A549 (cell line): ENCODE measurements at regions of chr1 and their contacts with region 1.

Region 1: DNA sequence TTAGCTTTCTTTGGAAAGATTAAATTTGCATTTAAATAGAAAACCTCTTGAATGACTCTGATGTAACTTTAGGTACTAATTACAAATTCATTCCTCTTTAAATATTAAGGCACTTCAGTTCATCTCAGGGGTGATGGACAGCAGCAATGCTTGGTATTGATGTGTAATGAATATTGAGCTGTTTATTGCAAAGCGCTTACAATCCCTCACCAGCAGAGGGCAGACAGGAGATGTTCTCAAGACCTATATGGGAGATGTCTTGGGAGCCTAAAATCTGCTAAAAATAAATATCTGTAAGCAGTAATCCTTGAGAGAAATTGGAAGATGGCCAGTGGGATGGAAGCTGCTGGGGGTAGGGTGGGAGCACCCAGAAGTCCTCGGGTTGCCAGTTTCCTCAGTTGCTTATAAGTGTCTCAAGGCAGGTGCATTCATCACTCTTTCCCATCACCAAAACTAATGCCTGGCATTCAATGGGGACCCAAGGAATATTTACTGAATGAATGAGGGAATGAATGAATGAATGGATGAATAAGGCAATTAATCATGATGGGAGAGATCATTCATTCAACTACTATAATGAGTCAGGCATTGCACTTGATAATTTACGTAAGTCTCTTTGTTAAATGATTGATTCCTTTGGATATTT is 2.3 kb downstream of the KLHDC8A start:
- DNase-seq: peak; percentile 35 to 76
- ATAC-seq: peak; percentile 65 to 83; a peak in 4 of 6 replicates
- H3K4me3 ChIP-seq: no peak overlapping the region
- H3K27ac ChIP-seq: no peak overlapping the region; a peak in 1 of 6 replicates
- H3K4me1 ChIP-seq: peaks cover 25% of the 10 kb centered on the region
- CTCF ChIP-seq: peak; percentile 86
- EP300 ChIP-seq: no peak
- POLR2A ChIP-seq: no peak
- RAD21 ChIP-seq: peak; percentile 74 to 79

Region 2: GRCh38 chr1:204940591-204940990 is 413.8 kb before region 1 on chr1:
- CTCF ChIA-PET with region 1: no interaction called
- POLR2A ChIA-PET with region 1: no interaction called
- DNase-seq: no peak
- ATAC-seq: no peak
- H3K4me3 ChIP-seq: no peak overlapping the region
- H3K27ac ChIP-seq: no peak overlapping the region
- H3K4me1 ChIP-seq: no peaks in the 10 kb centered on the region
- CTCF ChIP-seq: no peak
- EP300 ChIP-seq: no peak
- POLR2A ChIP-seq: no peak
- RAD21 ChIP-seq: no peak

Region 3: DNA sequence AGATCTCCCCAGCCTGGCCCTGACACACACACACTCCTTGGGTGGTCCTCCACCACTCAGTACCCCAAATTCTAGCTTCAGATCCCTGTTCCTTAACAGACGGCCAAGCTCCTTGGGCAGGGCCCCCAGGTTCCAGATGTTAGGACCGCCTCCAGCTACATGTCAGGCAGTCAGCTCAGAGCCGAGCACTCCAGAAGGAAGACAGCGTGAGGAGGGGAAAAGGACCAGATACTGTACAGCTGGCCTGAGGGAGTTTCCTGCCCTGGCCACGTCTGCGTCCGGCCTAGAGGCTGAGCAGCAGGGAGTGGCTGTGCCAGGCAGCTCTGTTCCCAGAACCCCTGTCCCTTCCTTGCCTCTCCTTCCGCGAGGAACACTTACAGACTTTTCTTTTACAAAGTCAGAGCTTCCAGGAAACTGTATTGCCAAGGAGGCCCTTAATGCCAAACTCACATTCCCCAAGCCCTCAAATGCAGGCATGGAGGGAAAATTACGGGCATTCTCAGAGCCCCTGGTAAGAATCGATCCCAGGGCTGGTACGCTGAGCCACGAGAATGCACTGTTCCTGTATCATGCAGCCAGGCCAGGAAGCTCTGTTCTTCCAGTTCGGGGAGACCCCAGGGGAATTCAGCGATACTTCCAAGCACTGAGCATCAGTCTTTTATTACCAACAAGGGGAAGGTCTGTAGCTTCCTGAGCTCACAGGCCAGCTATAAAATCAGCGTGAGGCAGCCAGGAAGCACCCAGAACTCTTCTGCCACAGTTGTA is 356.6 kb before region 1 on chr1:
- CTCF ChIA-PET with region 1: no interaction called
- POLR2A ChIA-PET with region 1: no interaction called
- DNase-seq: no peak
- ATAC-seq: no peak
- H3K4me3 ChIP-seq: no peak overlapping the region
- H3K27ac ChIP-seq: no peak overlapping the region
- H3K4me1 ChIP-seq: no peaks in the 10 kb centered on the region
- CTCF ChIP-seq: no peak
- EP300 ChIP-seq: no peak
- POLR2A ChIP-seq: no peak
- RAD21 ChIP-seq: no peak

Region 4: DNA sequence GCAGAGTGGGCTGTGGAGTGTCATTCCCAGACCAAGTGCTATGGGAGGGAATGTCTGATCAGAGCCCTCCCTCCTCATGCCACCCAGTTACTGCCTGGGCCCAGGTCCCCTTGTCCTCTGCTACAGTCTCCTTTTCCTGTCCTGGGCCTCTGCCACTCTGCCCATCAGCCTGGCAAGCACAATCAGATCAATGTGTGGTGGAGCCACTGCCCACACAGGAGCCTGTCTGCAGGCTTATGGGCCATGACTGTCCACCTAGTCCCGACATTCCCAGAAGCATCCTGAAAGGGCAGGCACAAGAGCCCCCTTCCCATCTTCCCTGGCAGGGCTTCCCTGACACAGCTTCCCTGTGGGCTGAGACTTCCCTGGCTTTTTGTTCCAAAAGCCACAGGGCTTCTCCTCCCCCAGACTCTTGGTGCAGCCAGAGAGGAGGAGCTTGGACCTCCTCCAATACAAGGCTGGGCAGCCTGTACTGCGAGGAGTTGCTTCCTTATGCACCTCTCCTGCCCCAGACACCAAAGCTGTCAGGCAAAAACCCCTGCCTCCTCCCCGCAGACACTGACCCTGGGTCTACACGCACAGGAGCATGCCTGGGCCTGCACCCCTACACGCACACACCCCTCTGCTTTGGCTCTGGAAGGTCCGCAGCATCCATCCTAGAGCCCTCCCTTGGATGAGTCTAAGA is 340.6 kb before region 1 on chr1:
- CTCF ChIA-PET with region 1: no interaction called
- POLR2A ChIA-PET with region 1: no interaction called
- DNase-seq: no peak
- ATAC-seq: no peak
- H3K4me3 ChIP-seq: no peak overlapping the region
- H3K27ac ChIP-seq: no peak overlapping the region
- H3K4me1 ChIP-seq: no peaks in the 10 kb centered on the region
- CTCF ChIP-seq: no peak
- EP300 ChIP-seq: no peak
- POLR2A ChIP-seq: no peak
- RAD21 ChIP-seq: no peak

Region 5: DNA sequence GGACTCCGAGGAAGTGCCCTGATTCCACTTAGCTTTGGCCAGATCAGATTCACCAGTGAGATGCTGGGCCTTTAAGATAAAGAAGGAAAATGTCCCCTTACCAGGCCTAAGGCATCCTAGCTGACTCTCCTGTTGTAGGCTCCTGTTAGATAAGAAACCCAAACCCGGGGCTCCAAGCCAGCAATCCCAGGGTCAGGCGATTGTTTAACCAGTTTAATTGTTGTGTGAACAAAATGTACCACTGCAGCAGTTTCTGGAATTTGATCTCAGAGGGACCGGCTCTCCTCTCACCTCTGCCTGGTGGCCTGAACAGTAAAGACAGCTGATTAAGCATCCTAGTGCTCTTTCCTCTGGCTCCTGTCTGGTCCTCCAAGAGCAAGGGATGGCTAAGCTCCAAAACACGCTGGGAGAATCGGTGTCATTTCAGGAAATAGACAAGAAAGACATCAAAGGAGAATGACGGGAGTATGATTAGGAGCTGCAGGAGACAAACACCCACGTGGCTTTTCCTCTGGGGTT is 11.6 kb after region 1 on chr1:
- CTCF ChIA-PET with region 1: interaction called, 49 read pairs
- POLR2A ChIA-PET with region 1: no interaction called
- DNase-seq: no peak
- ATAC-seq: peak; percentile 53 to 59; a peak in 3 of 6 replicates
- H3K4me3 ChIP-seq: no peak overlapping the region
- H3K27ac ChIP-seq: peak overlapping the region in 1 of 2 experiments; percentile 0; a peak in 1 of 6 replicates
- H3K4me1 ChIP-seq: peaks cover 12% of the 10 kb centered on the region
- CTCF ChIP-seq: no peak
- EP300 ChIP-seq: no peak
- POLR2A ChIP-seq: no peak
- RAD21 ChIP-seq: no peak

Region 6: GRCh38 chr1:205391386-205391785 is 37.0 kb after region 1 on chr1:
- CTCF ChIA-PET with region 1: interaction called, 25 read pairs
- POLR2A ChIA-PET with region 1: no interaction called
- DNase-seq: no peak
- ATAC-seq: no peak
- H3K4me3 ChIP-seq: no peak overlapping the region
- H3K27ac ChIP-seq: no peak overlapping the region
- H3K4me1 ChIP-seq: no peaks in the 10 kb centered on the region
- CTCF ChIP-seq: no peak
- EP300 ChIP-seq: no peak
- POLR2A ChIP-seq: no peak
- RAD21 ChIP-seq: no peak

Region 7: GRCh38 chr1:205422993-205423625 is 68.7 kb after region 1 on chr1:
- CTCF ChIA-PET with region 1: interaction called, 16 read pairs
- POLR2A ChIA-PET with region 1: no interaction called
- DNase-seq: no peak
- ATAC-seq: no peak
- H3K4me3 ChIP-seq: no peak overlapping the region
- H3K27ac ChIP-seq: no peak overlapping the region
- H3K4me1 ChIP-seq: no peaks in the 10 kb centered on the region
- CTCF ChIP-seq: 0 out of 3 replicates have a peak, but pooled peaks have one; percentile 9
- EP300 ChIP-seq: no peak
- POLR2A ChIP-seq: no peak
- RAD21 ChIP-seq: no peak

Region 8: DNA sequence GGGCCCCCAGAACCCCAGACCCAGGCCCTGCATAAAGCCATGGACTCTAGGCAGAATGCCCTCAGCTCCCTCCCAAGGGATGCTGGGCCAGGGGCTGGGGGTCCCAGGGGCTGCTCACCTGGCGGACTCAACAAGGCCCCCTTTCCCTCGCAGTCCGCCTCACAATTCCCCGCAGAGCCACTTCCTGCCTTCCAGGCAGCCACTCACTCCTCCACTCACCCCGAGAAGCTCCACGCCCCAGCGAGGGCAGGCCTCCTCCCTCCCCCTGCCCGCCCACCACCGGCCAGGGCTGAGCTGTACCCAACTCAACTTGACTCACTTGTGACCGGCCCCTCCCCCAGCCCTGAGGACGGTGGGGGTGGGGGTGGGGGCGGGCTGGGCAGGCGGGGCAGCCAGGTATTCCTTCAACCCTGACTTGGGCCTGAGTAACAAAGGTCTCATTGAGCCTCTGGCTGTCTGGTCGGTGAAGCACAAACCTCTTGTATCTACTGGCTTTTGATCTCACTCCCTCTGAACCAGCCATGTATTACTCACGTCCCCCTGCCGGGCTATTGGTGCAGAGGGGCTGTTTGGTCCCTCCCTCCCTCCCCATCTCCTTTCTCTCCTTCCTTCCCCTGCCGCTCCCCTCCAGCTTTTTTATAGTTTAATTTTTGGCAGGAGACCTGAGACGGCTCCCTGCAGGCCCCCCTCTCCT is 95.5 kb after region 1 on chr1:
- CTCF ChIA-PET with region 1: interaction called, 11 read pairs
- POLR2A ChIA-PET with region 1: no interaction called
- DNase-seq: peak; percentile 35 to 69
- ATAC-seq: peak; percentile 40 to 68; a peak in 5 of 6 replicates
- H3K4me3 ChIP-seq: no peak overlapping the region
- H3K27ac ChIP-seq: peak overlapping the region; percentile 36 to 53; a peak in 5 of 6 replicates
- H3K4me1 ChIP-seq: peaks cover 12% of the 10 kb centered on the region
- CTCF ChIP-seq: no peak
- EP300 ChIP-seq: no peak
- POLR2A ChIP-seq: no peak
- RAD21 ChIP-seq: no peak